ENCODE measurements at regions of chr15 and their contacts with region 1.

Region 1: GRCh38 chr15:63041974-63042819 is at the start of gene TPM1:
- DNase-seq: peak; percentile 91
- H3K4me3 ChIP-seq: peak within 1 kb of the TSS; percentile 77 to 95 (median 83)
- H3K27ac ChIP-seq: peak within 1 kb of the TSS; percentile 87
- H3K4me1 ChIP-seq: peaks cover 31% of the 10 kb centered on the region
- H3K27me3 ChIP-seq: no peaks in the 10 kb centered on the region
- CTCF ChIP-seq: peak in 1 of 2 donors; percentile 12
- POLR2A ChIP-seq: peak; percentile 91
- total RNA-seq, gene TPM1: 558 and 678 TPM in 2 replicates

Region 2: DNA sequence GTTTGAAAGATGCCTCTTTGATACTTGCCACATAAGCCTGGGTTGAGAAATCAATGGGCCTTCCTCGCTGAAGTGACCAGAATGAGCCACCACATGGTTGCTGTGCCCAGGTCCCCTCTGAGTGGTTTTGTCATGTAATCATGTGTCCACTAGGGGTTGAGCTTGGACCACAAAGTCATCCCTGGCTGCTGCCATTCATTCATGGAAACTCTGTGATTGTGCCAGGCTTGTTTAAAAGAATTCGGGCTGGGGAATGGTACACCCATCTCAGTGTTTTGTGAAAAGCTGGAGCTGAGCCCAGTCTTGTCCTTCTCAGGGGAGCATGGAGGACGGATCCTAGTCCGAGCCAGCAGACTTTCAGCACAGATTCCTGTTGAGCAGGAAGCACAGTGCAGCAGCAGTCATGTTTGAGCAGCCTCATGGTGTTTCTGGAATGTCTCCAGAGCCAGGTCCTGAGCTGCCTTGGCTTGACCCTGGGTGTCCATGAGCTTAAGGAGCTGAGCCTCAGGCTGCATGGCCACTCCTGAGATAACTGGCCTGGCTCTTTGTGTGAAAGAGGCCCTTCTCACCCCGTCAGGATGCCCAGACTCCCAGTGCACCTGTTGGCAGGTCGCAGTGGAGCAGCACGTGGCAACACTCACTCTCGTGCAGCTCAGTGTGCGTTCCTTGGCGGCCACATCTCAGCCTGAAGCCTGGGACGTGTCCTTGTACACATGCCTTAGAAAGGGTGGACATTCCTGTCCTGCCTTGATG is 260.0 kb before region 1 on chr15:
- CTCF ChIA-PET with region 1: interaction called, 48 read pairs
- POLR2A ChIA-PET with region 1: interaction called, 9 read pairs
- dilution Hi-C with region 1: no loop called
- intact Hi-C with region 1: loop called (anchors 1 kb)
- DNase-seq: peak; percentile 90
- H3K4me3 ChIP-seq: no peak overlapping the region
- H3K27ac ChIP-seq: no peak overlapping the region
- H3K4me1 ChIP-seq: peaks cover 8% of the 10 kb centered on the region
- H3K27me3 ChIP-seq: no peaks in the 10 kb centered on the region
- CTCF ChIP-seq: peak; percentile 73 to 77
- POLR2A ChIP-seq: no peak

Region 3: DNA sequence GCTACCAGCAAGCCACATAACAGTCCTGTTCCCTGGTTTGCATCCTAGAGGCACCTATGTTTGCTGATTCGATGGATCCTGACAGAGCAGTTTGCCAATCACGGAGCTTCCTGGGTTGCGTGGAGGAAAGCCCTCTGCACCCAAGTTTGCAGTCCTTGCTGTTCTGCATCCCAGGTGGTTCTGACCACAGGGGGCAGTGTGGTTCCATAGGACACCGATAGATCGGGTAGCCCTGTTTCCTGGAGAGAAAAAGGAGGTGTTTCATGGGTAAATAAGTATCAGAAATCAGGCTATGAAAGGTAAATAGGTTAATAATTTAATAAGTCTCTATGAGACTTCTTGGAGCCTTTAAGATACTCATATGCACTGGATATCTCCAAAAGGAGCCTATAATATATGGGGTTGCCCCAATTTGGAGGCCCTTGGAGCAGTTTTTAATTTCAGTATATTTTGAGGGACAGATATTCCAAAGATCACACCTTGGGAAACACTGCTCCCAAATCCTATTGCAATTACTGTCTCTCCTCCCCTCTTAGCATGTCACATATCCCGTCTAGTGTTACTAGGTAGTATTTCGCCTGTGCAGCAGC is 194.2 kb before region 1 on chr15:
- CTCF ChIA-PET with region 1: interaction called, 52 read pairs
- POLR2A ChIA-PET with region 1: interaction called, 17 read pairs
- dilution Hi-C with region 1: no loop called
- intact Hi-C with region 1: loop called (anchors 1 kb)
- DNase-seq: peak; percentile 65
- H3K4me3 ChIP-seq: no peak overlapping the region
- H3K27ac ChIP-seq: peak overlapping the region; percentile 44
- H3K4me1 ChIP-seq: peaks cover 39% of the 10 kb centered on the region
- H3K27me3 ChIP-seq: no peaks in the 10 kb centered on the region
- CTCF ChIP-seq: peak; percentile 57 to 73
- POLR2A ChIP-seq: no peak

Region 4: DNA sequence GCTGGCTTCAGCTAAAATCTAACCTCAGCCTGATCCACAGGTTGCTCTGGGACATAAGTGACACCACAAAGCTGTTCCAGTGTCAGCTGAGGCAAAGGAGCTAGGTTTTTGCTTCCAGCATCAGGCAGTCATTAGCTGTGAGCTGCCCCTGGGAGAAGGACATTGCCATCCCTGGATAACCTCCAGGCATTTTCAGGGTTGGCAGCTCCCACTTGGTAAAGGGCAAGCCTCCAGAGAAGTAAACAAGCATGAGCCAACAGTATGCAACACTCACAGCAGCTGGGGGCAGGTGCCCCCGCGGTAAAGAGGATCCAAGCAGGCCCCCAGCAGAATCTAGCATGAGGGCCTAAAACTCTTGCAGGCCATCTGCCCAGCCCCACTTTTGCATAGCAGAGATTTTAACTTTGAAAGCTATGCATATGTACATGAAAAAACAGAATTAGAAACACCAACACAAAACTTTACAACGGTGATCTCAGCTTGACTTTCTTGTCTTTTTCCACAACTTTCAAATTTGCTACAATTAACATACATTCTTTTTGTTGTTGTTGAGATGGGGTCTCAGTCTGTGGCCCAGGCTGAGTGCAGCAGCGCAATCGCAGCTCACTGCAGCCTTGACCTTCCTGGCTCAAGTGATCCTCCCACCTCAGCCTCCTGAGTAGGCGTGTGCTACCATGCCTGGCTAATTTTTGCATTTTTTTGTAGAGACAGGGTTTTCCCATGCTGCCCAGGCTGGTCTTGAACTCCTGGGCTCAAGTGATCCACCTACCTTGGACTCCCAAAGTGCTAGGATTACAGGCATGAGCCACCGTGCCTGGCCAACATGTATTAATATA is 83.5 kb before region 1 on chr15:
- CTCF ChIA-PET with region 1: interaction called, 4 read pairs
- POLR2A ChIA-PET with region 1: no interaction called
- dilution Hi-C with region 1: no loop called
- intact Hi-C with region 1: loop called (anchors 1 kb)
- DNase-seq: no peak
- H3K4me3 ChIP-seq: no peak overlapping the region
- H3K27ac ChIP-seq: no peak overlapping the region
- H3K4me1 ChIP-seq: peaks cover 18% of the 10 kb centered on the region
- H3K27me3 ChIP-seq: no peaks in the 10 kb centered on the region
- CTCF ChIP-seq: no peak
- POLR2A ChIP-seq: no peak

Region 5: DNA sequence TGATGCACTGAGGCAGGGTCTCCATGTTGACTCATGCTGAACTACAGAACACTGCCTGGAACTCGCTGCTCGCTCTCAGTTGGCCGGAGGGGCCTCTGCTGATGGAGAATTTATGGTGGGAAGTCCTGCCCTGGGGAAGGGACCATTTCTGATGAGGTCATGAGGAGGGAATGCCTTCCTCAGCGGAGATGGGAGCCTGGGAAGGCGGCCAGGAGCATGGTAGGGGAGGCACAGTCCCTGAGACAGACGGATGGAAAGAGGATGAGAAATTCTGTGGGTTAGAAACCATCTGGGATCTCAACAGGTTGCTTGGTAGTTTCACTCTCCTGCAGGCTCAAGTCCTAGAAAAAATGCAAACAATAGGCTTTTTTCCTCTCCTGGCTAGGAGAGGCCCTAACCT is 56.4 kb before region 1 on chr15:
- CTCF ChIA-PET with region 1: no interaction called
- POLR2A ChIA-PET with region 1: no interaction called
- dilution Hi-C with region 1: no loop called
- intact Hi-C with region 1: no loop called
- DNase-seq: peak; percentile 3
- H3K4me3 ChIP-seq: no peak overlapping the region
- H3K27ac ChIP-seq: no peak overlapping the region
- H3K4me1 ChIP-seq: no peaks in the 10 kb centered on the region
- H3K27me3 ChIP-seq: peaks cover 0 to 2% of the 10 kb centered on the region in 2 experiments
- CTCF ChIP-seq: no peak
- POLR2A ChIP-seq: no peak

Region 6: DNA sequence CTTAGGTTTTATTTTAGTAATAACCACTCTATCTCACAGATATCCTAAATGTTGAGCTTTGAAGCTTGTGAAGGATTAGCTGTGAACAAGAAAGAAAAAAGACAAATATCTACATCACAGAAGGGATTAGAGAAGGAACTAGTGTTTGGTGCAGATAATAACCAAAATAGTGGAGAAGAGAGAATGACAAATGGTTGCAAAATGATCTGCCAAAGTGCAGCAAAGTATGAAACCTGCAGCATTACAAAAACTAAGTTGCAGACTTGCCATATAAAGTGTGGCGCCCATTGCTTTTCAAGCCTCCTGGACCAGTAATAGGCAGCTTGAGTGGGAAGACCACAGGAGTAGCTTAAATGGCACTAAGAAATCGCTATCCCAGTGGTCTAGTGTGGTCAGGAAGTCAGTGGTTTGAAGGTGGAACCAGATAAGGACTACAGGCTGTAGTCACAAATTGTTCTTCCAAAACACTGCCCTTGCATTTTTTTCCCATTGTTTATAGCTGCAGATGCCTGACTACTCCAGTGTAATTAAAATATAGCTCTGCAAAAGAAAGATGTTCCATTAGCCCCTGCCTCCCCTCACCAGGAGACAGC is 21.1 kb after region 1 on chr15:
- CTCF ChIA-PET with region 1: no interaction called
- POLR2A ChIA-PET with region 1: no interaction called
- dilution Hi-C with region 1: no loop called
- intact Hi-C with region 1: no loop called
- DNase-seq: peak; percentile 62
- H3K4me3 ChIP-seq: no peak overlapping the region
- H3K27ac ChIP-seq: no peak overlapping the region
- H3K4me1 ChIP-seq: peaks cover 3% of the 10 kb centered on the region
- H3K27me3 ChIP-seq: no peaks in the 10 kb centered on the region
- CTCF ChIP-seq: no peak
- POLR2A ChIP-seq: peak; percentile 59

Region 7: GRCh38 chr15:63110464-63111026 is 68.3 kb after region 1 on chr15:
- CTCF ChIA-PET with region 1: no interaction called
- POLR2A ChIA-PET with region 1: no interaction called
- dilution Hi-C with region 1: no loop called
- intact Hi-C with region 1: no loop called
- DNase-seq: no peak
- H3K4me3 ChIP-seq: no peak overlapping the region
- H3K27ac ChIP-seq: no peak overlapping the region
- H3K4me1 ChIP-seq: peaks cover 5% of the 10 kb centered on the region
- H3K27me3 ChIP-seq: no peaks in the 10 kb centered on the region
- CTCF ChIP-seq: no peak
- POLR2A ChIP-seq: no peak

Region 8: DNA sequence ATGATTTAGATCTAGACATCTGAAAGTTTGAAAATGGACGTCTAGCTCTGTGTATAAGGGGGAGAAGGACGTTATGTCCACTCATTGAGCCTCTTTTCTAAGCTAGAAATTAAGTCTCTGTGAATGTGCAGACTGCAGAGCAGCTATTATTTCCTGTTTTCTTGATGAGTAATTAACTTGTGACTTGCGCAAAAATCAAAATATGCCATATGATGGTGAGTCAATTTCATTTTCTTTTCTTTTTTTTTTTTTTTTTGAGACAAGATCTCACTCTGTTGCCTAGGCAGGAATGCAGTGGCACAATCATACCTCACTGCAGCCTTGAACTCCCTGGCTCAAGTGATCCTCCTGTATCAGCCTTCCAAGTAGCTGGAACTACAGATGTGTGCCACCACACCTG is 93.6 kb after region 1 on chr15:
- CTCF ChIA-PET with region 1: interaction called, 3 read pairs
- POLR2A ChIA-PET with region 1: no interaction called
- dilution Hi-C with region 1: no loop called
- intact Hi-C with region 1: loop called (anchors 1 kb)
- DNase-seq: peak; percentile 94
- H3K4me3 ChIP-seq: no peak overlapping the region
- H3K27ac ChIP-seq: peak overlapping the region; percentile 96
- H3K4me1 ChIP-seq: peaks cover 36% of the 10 kb centered on the region
- H3K27me3 ChIP-seq: no peaks in the 10 kb centered on the region
- CTCF ChIP-seq: no peak
- POLR2A ChIP-seq: peak; percentile 78